ENCODE measurements at regions of chr7 and their contacts with region 1.

Region 1: DNA sequence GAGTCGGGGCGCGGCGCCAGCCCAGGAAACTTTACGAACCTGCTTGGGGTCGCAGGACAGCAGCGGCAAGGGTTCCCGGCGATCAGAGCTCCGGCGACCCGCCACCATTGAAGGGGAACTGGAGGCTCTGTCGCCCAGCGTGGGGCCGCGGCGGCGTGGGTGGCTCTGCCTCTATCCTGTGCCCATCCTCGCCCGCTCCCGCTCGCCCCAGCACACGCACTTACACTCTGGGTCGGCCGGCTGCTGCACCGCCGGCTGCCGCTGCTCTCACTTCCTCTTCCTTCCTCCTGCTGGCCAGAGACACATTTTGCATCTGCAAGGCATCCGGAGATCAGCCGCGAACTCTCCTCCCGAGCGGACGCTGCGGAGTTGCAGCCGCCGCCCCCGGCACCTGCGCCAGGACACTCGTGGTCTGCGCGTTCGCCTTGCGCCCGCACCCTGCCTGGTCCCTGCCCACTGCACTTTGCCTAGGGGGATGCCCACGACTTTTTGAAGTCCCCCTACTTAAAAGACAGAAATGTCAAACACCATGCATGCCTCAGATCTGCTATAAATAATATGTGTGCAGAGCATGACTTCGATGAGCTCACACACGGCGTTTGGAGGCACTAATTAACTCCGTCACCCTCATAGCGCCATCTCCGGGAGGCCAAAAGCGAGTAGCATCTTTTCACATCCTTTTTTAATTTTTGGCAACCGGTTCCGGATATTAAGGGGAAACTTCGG is at the start of gene ELMO1:
- DNase-seq: peak; percentile 89
- ATAC-seq: peak; percentile 93
- H3K4me3 Mint-ChIP-seq: peak within 1 kb of the TSS; percentile 87
- H3K27ac Mint-ChIP-seq: peak within 1 kb of the TSS; percentile 90
- H3K4me1 Mint-ChIP-seq: peaks cover 51% of the 10 kb centered on the region
- H3K27me3 Mint-ChIP-seq: peaks cover 3% of the 10 kb centered on the region
- total RNA-seq, gene ELMO1: 64.0 to 68.5 TPM

Region 2: DNA sequence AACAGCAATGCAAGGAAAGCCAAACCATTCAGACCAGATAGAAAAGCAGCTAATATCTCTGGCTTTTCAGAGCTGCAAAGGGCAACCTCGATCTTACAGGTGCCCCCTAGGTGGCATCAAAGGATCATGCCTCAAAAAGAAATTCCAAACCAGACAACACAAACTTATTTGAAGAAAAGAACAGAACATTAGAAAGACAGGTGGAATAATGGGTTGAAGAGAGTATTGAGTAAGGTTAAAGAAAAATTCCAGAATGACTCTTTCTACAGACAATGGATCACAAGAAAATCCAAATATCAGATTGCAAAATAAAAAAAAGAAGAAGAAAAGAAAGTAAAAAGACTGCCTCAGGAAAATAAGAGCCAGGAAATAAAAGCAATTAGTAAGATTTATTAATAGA is 213.9 kb before region 1 on chr7:
- CTCF ChIA-PET with region 1: interaction called, 11 read pairs
- POLR2A ChIA-PET with region 1: no interaction called
- DNase-seq: peak; percentile 31
- ATAC-seq: no peak
- H3K4me3 Mint-ChIP-seq: no peak overlapping the region
- H3K27ac Mint-ChIP-seq: no peak overlapping the region
- H3K4me1 Mint-ChIP-seq: peaks cover 4% of the 10 kb centered on the region
- H3K27me3 Mint-ChIP-seq: no peaks in the 10 kb centered on the region

Region 3: DNA sequence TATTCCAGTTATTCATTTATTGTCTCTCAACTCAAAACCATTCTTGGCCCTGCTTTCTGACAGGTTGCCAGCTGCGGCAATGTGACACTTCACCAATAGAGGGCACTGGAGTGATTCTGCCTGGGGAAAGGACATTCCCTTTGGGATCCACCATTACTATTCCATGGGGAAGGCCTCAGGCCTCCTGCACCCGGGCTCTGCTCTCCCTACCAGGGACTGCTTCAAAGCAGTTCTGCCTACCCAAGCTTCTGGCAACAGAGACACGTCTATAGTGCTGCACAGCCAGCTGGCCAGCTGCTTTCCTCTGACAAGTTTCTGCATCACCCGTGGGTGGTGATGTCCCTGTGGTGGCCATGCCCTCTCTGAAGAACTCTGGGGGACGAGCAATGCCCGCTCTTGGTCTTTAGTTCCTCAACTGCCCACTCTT is 164.0 kb before region 1 on chr7:
- CTCF ChIA-PET with region 1: interaction called, 17 read pairs
- POLR2A ChIA-PET with region 1: no interaction called
- DNase-seq: peak; percentile 49
- ATAC-seq: no peak
- H3K4me3 Mint-ChIP-seq: no peak overlapping the region
- H3K27ac Mint-ChIP-seq: no peak overlapping the region
- H3K4me1 Mint-ChIP-seq: peaks cover 26% of the 10 kb centered on the region
- H3K27me3 Mint-ChIP-seq: no peaks in the 10 kb centered on the region

Region 4: DNA sequence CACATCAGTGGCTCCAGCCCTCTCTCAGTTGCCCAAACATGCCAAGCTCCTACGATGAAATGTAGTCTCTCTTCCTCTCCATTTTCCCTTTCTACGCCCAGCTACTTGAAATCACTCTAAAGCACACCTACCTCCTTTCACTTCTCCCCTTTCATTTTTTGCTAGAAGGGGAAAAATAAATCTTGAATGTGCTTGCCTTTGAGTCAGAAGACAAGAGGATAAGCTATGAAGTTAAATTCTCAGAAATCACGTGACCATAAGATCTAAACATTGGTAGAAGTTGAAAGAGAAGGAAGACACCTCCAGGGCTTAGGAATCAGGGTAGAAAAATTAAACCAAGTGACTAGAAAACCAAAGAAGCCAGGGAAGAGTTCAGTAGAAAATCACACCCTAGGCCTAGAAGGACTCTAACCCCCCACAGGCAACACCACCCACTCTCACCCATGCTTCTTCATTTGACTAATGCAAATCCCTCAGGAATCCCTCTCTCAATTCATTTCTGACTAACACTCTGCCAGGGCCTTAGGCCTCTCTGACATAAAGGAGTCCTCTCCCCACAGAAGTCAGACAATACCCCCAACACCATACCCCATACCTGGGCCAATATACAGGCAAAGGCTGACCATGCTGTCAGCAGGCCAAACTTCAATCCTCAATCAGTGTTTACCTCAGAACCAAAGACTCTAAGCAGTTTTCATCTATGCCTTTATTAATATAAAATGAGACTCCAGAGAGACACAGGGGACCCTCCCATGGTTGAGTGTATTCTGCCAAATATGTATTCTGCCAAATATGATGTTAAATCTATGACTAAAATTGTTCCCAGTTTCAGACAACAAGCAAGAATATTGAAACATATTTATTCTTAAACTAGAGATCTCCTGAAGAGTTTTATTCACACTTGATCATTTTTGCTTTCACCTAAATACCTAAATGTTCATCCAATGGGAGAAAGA is 85.0 kb before region 1 on chr7:
- CTCF ChIA-PET with region 1: interaction called, 5 read pairs
- POLR2A ChIA-PET with region 1: interaction called, 13 read pairs
- DNase-seq: no peak
- ATAC-seq: no peak
- H3K4me3 Mint-ChIP-seq: no peak overlapping the region
- H3K27ac Mint-ChIP-seq: peak overlapping the region; percentile 70
- H3K4me1 Mint-ChIP-seq: peaks cover 52% of the 10 kb centered on the region
- H3K27me3 Mint-ChIP-seq: peaks cover 8% of the 10 kb centered on the region

Region 5: DNA sequence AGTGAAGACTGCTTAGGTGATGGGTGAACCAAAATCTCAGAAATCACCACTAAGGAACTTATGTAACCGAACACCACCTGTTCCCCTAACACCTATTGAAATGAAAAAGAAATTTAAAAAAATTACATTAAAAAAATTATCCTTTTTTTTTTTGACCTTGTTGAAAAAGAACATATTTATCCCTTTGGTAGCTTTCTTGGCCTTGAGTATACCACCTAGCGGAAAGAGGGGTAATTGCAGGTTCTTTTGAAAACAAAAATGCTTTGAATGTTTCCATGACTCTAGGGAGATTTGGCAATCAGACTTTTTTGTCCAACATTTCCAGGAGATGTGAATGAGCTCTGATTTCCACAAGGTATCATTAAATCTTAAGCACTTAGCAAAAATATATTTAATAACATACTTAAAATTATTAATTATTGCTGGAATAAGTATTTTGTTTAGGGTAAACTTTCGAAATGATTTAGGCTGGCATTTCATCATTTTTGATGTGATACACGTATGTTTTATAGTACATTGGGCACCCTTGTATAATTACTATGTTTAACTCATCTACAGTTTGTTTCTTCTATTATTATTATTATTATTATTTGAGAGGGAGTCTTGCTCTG is 46.9 kb after region 1 on chr7:
- CTCF ChIA-PET with region 1: interaction called, 10 read pairs
- POLR2A ChIA-PET with region 1: interaction called, 3 read pairs
- DNase-seq: no peak
- ATAC-seq: no peak
- H3K4me3 Mint-ChIP-seq: no peak overlapping the region
- H3K27ac Mint-ChIP-seq: no peak overlapping the region
- H3K4me1 Mint-ChIP-seq: peaks cover 5% of the 10 kb centered on the region
- H3K27me3 Mint-ChIP-seq: no peaks in the 10 kb centered on the region

Measured in activated CD8-positive, alpha-beta T cell treated with anti-CD3 and anti-CD28 coated beads, Interleukin-2, amount 10 ng/mL, durations not matched to agents 7 days and 5 days (primary cell).